CD8-positive, alpha-beta T cell (primary cell): ENCODE measurements at regions of chr20 and their contacts with region 1.

Region 1: GRCh38 chr20:34720266-34720665 is 16.1 kb downstream of the TP53INP2 start:
- DNase-seq: no peak
- ATAC-seq: no peak
- H3K4me3 ChIP-seq: no peak overlapping the region
- H3K4me3 Mint-ChIP-seq: no peak overlapping the region
- H3K27ac ChIP-seq: no peak overlapping the region
- H3K27ac Mint-ChIP-seq: peak overlapping the region; percentile 27
- H3K4me1 ChIP-seq: no peaks in the 10 kb centered on the region
- H3K4me1 Mint-ChIP-seq: no peaks in the 10 kb centered on the region
- H3K27me3 ChIP-seq: no peaks in the 10 kb centered on the region
- H3K27me3 Mint-ChIP-seq: no peaks in the 10 kb centered on the region
- CTCF ChIP-seq: no peak

Region 2: GRCh38 chr20:35120012-35120701 is 399.9 kb after region 1 on chr20:
- CTCF ChIA-PET with region 1: no interaction called
- POLR2A ChIA-PET with region 1: no interaction called
- intact Hi-C with region 1: loop called in 1 of 2 experiments (anchors 10 kb)
- DNase-seq: no peak
- ATAC-seq: no peak
- H3K4me3 ChIP-seq: no peak overlapping the region
- H3K4me3 Mint-ChIP-seq: no peak overlapping the region
- H3K27ac ChIP-seq: no peak overlapping the region
- H3K27ac Mint-ChIP-seq: peak overlapping the region; percentile 62
- H3K4me1 ChIP-seq: no peaks in the 10 kb centered on the region
- H3K4me1 Mint-ChIP-seq: no peaks in the 10 kb centered on the region
- H3K27me3 ChIP-seq: no peaks in the 10 kb centered on the region
- H3K27me3 Mint-ChIP-seq: no peaks in the 10 kb centered on the region
- CTCF ChIP-seq: no peak